ENCODE measurements at regions of chrX and their contacts with region 1.

Region 1: DNA sequence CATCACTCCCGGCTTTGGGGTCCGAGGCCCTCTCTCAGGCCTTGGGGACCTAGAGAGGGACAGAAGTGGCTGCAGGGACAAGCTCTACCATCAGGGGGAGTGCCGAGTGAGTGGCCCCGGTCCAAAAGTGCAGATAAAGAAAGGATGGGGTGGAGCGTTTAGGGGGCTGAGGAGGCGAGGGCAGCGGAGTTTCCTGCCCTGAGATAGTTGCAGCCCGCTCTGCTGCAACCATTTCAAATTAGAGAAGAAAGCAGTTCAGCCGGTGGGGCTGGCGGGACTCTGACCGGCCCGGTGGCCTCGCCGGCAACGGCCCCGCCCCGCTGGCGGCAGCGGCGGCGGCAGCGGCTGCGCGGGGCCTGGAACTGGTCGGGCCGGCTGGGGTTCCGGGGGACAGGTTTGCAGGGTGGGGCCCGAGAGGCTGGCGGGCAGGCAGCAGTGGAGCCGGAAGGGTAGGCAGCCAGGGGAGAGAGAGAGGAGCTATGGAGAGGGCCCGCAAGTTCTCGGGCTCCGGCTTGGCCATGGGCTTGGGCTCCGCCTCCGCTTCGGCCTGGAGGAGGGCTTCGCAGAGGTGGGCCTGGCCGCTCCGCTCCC is 7.6 kb downstream of the DLG3 start:
- DNase-seq: peak; percentile 69
- ATAC-seq: peak; percentile 22
- H3K4me3 Mint-ChIP-seq: peak overlapping the region; percentile 80
- H3K27ac Mint-ChIP-seq: no peak overlapping the region
- H3K4me1 Mint-ChIP-seq: peaks cover 36% of the 10 kb centered on the region
- H3K27me3 Mint-ChIP-seq: no peaks in the 10 kb centered on the region; the same call in 1 of the 2 replicates
- CTCF ChIP-seq: peak; percentile 29

Region 2: GRCh38 chrX:70422851-70423341 is 29.3 kb before region 1 on chrX and contains the start of gene GDPD2:
- CTCF ChIA-PET with region 1: interaction called, 14 read pairs
- POLR2A ChIA-PET with region 1: interaction called, 4 read pairs
- DNase-seq: peak; percentile 64
- ATAC-seq: peak; percentile 81
- H3K4me3 Mint-ChIP-seq: peak within 1 kb of the TSS; percentile 76
- H3K27ac Mint-ChIP-seq: peak within 1 kb of the TSS; percentile 77
- H3K4me1 Mint-ChIP-seq: peaks cover 30% of the 10 kb centered on the region
- H3K27me3 Mint-ChIP-seq: no peaks in the 10 kb centered on the region
- CTCF ChIP-seq: no peak
- total RNA-seq, gene GDPD2: 7.0 to 9.3 TPM (median 8.8 TPM) in 3 replicates

Region 3: GRCh38 chrX:70433848-70434351 is 18.3 kb before region 1 on chrX:
- CTCF ChIA-PET with region 1: interaction called, 32 read pairs
- POLR2A ChIA-PET with region 1: no interaction called
- DNase-seq: peak; percentile 78
- ATAC-seq: peak; percentile 68
- H3K4me3 Mint-ChIP-seq: peak overlapping the region; percentile 91
- H3K27ac Mint-ChIP-seq: peak overlapping the region; percentile 96
- H3K4me1 Mint-ChIP-seq: peaks cover 16% of the 10 kb centered on the region
- H3K27me3 Mint-ChIP-seq: peaks cover 10% of the 10 kb centered on the region
- CTCF ChIP-seq: peak; percentile 59

Region 4: GRCh38 chrX:70664726-70665125 is 212.5 kb after region 1 on chrX:
- CTCF ChIA-PET with region 1: interaction called, 13 read pairs
- POLR2A ChIA-PET with region 1: no interaction called
- DNase-seq: no peak
- ATAC-seq: no peak
- H3K4me3 Mint-ChIP-seq: no peak overlapping the region
- H3K27ac Mint-ChIP-seq: no peak overlapping the region
- H3K4me1 Mint-ChIP-seq: no peaks in the 10 kb centered on the region
- H3K27me3 Mint-ChIP-seq: no peaks in the 10 kb centered on the region; the same call in 1 of the 2 replicates
- CTCF ChIP-seq: no peak

Measured in WTC11 (cell line).